Mammary epithelial cell (primary cell): ENCODE measurements at regions of chr19 and their contacts with region 1.

Region 1: DNA sequence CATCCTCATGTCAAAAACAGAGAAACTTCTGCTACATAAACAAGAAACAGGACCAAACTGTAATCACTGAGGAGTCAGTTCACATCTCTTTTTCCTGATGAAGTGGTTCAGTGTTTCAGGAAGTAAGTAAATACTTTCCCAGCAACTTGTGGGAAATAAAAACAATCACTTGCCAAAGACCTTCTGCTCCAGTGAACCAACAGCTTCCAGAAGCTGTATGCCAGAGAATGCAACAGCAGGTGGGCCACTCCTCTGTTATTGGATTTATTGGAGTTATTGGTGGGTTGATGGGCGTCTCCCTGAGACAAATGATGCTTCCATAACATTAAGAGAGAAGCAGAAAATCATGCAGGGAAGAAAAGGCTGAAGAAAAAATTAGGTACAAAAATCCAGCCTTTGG is 9.9 kb downstream of the SLC6A16 start:
- DNase-seq: no peak
- H3K4me3 ChIP-seq: no peak overlapping the region
- H3K27ac ChIP-seq: no peak overlapping the region
- H3K4me1 ChIP-seq: no peaks in the 10 kb centered on the region
- H3K27me3 ChIP-seq: no peaks in the 10 kb centered on the region
- CTCF ChIP-seq: no peak

Region 2: DNA sequence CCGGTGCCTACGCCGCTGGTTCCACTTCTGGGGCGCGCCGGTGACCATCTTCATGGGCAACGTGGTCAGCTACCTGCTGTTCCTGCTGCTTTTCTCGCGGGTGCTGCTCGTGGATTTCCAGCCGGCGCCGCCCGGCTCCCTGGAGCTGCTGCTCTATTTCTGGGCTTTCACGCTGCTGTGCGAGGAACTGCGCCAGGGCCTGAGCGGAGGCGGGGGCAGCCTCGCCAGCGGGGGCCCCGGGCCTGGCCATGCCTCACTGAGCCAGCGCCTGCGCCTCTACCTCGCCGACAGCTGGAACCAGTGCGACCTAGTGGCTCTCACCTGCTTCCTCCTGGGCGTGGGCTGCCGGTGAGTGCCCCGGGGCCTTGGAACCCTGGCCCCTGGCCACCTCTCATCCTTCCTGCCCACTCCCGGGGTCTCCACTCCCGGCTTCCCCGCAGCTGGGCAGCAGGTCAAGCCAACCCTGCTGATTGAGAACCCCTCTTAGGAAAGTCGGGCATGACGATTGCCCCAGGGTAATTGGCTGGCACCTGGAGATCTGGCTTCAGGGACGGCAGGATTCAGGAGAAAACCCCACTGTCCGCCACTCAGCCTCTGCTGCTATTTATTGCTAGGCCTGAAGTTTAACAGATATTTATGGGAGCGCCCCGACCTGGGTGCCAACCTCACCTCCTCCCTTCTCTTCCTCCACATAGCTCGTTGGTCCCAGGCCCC is 118.4 kb before region 1 on chr19:
- CTCF ChIA-PET with region 1: no interaction called
- dilution Hi-C with region 1: no loop called
- in situ Hi-C with region 1: no loop called
- intact Hi-C with region 1: no loop called
- DNase-seq: no peak
- H3K4me3 ChIP-seq: no peak overlapping the region
- H3K27ac ChIP-seq: no peak overlapping the region
- H3K4me1 ChIP-seq: peaks cover 6% of the 10 kb centered on the region
- H3K27me3 ChIP-seq: no peaks in the 10 kb centered on the region
- CTCF ChIP-seq: no peak

Region 3: DNA sequence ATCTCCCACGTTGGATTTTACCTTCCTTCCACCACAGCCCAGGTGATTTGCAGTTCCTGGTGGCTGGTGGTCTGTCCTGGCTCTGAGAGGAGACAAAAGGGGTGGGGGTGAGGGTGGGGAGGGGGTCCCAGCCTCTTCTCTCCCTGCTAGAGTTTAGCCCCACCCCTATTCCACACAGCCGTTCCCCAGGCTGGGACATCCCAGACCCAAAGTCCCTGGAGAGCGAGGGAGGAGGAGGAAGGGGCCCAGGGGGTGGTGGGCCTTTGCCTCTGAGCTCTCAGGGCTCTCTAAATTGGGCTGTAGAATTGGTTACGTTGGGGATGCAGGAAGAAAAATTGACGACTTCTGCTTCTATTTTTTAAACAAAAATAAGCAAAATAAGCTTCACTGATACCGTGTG is 72.0 kb before region 1 on chr19:
- CTCF ChIA-PET with region 1: no interaction called
- dilution Hi-C with region 1: loop called (anchors 5 kb)
- in situ Hi-C with region 1: no loop called
- intact Hi-C with region 1: no loop called
- DNase-seq: no peak
- H3K4me3 ChIP-seq: no peak overlapping the region
- H3K27ac ChIP-seq: no peak overlapping the region
- H3K4me1 ChIP-seq: no peaks in the 10 kb centered on the region
- H3K27me3 ChIP-seq: no peaks in the 10 kb centered on the region
- CTCF ChIP-seq: no peak

Region 4: DNA sequence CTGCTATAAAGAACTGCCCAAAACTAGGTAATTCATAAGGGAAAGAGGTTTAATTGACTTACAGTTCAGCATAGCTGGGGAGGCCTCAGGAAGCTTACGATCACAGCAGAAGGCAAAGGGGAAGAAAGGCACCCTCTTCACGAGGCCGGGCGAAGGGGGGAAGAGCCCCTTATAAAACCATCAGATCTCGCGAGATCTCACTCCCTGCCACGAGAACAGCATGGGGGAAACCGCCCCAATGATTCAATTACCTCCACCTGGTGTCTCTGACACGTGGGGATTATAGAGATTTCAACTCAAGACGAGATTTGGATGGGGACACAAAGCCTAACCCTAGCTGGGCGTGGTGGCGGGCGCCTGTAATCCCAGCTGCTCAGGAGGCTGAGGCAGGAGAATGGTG is 32.9 kb before region 1 on chr19:
- CTCF ChIA-PET with region 1: no interaction called
- dilution Hi-C with region 1: loop called (anchors 5 kb)
- in situ Hi-C with region 1: no loop called
- intact Hi-C with region 1: no loop called
- DNase-seq: no peak
- H3K4me3 ChIP-seq: no peak overlapping the region
- H3K27ac ChIP-seq: no peak overlapping the region
- H3K4me1 ChIP-seq: no peaks in the 10 kb centered on the region
- H3K27me3 ChIP-seq: no peaks in the 10 kb centered on the region
- CTCF ChIP-seq: no peak

Region 5: DNA sequence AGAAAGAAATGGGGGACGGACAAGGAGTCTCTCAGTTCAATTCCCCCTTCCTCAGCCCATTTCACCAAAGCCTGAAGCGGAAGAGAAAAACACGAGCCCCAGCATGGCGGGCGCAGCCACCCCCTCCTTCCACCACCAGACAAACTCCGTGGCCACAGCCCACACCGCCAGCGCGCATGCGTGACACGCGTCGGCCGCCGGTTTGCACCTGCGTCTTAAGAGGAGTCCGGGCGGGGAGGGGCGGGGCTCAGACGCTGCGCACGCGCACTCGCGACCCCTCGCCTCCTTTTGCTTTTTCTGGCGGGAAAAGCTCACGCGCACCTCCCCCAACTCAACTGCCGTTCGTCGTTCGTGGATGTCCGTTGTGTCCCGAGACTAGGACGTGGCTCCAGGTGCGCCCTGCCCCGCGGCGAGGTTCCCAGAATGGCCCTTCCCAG is 72.8 kb after region 1 on chr19 and contains the start of gene KASH5:
- CTCF ChIA-PET with region 1: no interaction called
- dilution Hi-C with region 1: no loop called
- in situ Hi-C with region 1: no loop called
- intact Hi-C with region 1: no loop called
- DNase-seq: no peak
- H3K4me3 ChIP-seq: peak within 1 kb of the TSS in 1 of 3 experiments; percentile 29
- H3K27ac ChIP-seq: no peak within 1 kb of the TSS
- H3K4me1 ChIP-seq: no peaks in the 10 kb centered on the region
- H3K27me3 ChIP-seq: no peaks in the 10 kb centered on the region
- CTCF ChIP-seq: no peak
- total RNA-seq, gene KASH5: not detected

Region 6: DNA sequence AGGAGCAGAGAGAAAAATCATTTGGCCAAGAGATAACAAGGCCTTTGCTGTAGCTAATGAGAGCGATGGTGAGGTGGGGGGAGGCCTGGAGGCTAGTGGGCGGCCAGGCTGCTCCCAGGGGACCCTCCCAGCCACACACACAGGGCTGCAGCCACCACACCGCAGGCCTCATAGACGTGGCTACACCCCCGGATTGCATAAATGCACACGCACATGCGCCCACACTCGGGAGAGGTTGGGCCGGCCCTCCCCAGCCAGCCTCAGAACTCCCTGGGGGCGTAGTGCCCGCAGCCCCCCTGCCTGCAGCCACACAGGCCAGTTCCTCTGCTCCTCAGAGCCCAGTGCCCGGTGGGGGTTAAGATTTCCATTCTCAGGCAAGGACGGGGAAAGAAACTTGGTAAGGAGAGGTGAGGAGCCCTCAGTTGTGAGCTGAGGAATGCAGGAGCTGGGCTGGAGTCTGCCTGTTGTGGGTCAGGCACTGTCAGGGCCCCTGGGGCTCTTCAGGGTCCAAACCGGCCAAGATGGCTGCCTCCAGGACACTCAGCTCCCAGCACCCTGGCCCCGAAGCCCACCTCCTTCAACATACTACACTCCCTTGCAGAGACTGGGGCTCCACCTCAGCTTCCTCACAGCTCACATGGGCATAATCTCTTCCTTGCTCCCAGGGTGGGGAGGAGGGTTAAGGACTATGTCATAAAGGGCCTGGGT is 100.1 kb after region 1 on chr19:
- CTCF ChIA-PET with region 1: no interaction called
- dilution Hi-C with region 1: loop called (anchors 5 kb)
- in situ Hi-C with region 1: no loop called
- intact Hi-C with region 1: no loop called
- DNase-seq: no peak
- H3K4me3 ChIP-seq: no peak overlapping the region
- H3K27ac ChIP-seq: no peak overlapping the region
- H3K4me1 ChIP-seq: no peaks in the 10 kb centered on the region
- H3K27me3 ChIP-seq: peaks cover 6% of the 10 kb centered on the region
- CTCF ChIP-seq: no peak